Heart right ventricle (tissue), 16 donors: ENCODE measurements at regions of chr20 and their contacts with region 1.

Region 1: GRCh38 chr20:23235173-23236027 is 115.2 kb upstream of the NXT1 start:
- DNase-seq: peak; percentile 73 to 77
- ATAC-seq: peak; percentile 88 to 95 (median 92)
- H3K4me3 ChIP-seq: no peak overlapping the region
- H3K27ac ChIP-seq: no peak overlapping the region
- H3K4me1 ChIP-seq: peaks cover 0 to 11% (median 0%) of the 10 kb centered on the region in 9 donors
- H3K27me3 ChIP-seq: no peaks in the 10 kb centered on the region
- CTCF ChIP-seq: peak; percentile 81 to 92 (median 89)

Region 2: GRCh38 chr20:23187751-23188150 is 47.6 kb before region 1 on chr20:
- intact Hi-C with region 1: loop called in 2 of 10 experiments (anchors 10 kb)
- DNase-seq: peak; percentile 36 to 44
- ATAC-seq: peak; percentile 67 to 97 (median 88)
- H3K4me3 ChIP-seq: no peak overlapping the region
- H3K27ac ChIP-seq: no peak overlapping the region
- H3K4me1 ChIP-seq: peaks cover 0 to 4% (median 0%) of the 10 kb centered on the region in 9 donors
- H3K27me3 ChIP-seq: no peaks in the 10 kb centered on the region
- CTCF ChIP-seq: peak in 1 of 9 donors; percentile 3

Region 3: DNA sequence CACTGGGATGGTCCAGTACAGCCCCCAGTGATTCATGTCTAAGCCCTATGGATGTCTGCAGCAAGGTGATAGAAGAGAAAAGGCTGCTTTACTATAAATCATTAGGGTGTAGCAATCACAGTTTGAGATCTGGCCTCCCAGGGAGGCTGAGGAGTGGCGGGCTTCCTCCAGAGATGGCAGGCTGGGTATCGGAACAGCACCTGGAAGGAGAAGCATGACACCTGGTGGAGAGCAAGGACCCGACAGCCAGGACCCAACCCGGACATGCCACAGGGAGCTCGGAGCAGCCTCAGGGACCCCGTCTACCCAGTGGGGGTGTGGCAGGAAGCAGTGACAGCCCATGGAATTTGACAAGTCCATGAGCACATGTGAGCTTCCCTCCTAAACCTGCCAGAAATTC is 34.5 kb before region 1 on chr20:
- intact Hi-C with region 1: no loop called
- DNase-seq: peak; percentile 33 to 48
- ATAC-seq: peak in 7 of 8 donors; percentile 33 to 58 (median 38)
- H3K4me3 ChIP-seq: no peak overlapping the region
- H3K27ac ChIP-seq: no peak overlapping the region
- H3K4me1 ChIP-seq: peaks cover 12 to 54% (median 44%) of the 10 kb centered on the region in 9 donors
- H3K27me3 ChIP-seq: no peaks in the 10 kb centered on the region
- CTCF ChIP-seq: peak; percentile 16 to 59 (median 48)